CD4-positive, alpha-beta memory T cell (primary cell): ENCODE measurements at regions of chr1 and their contacts with region 1.

Region 1: GRCh38 chr1:154936555-154937084 is at the start of gene PMVK:
- DNase-seq: peak; percentile 98 to 99 (median 98)
- H3K4me3 ChIP-seq: peak within 1 kb of the TSS; percentile 51 to 93
- H3K4me3 Mint-ChIP-seq: peak within 1 kb of the TSS; percentile 93 to 99 (median 97)
- H3K27ac ChIP-seq: peak within 1 kb of the TSS; percentile 96
- H3K27ac Mint-ChIP-seq: peak within 1 kb of the TSS; percentile 97 to 100 (median 99)
- H3K4me1 ChIP-seq: peaks cover 54% of the 10 kb centered on the region
- H3K4me1 Mint-ChIP-seq: peaks cover 36 to 70% (median 58%) of the 10 kb centered on the region in 4 donors
- H3K27me3 ChIP-seq: no peaks in the 10 kb centered on the region
- H3K27me3 Mint-ChIP-seq: no peaks in the 10 kb centered on the region
- total RNA-seq, gene PMVK: 17.6 to 21.2 TPM

Region 2: GRCh38 chr1:154791292-154792166 is 145.1 kb before region 1 on chr1:
- CTCF ChIA-PET with region 1: interaction called, 3 read pairs
- POLR2A ChIA-PET with region 1: interaction called, 11 read pairs
- intact Hi-C with region 1: no loop called
- DNase-seq: peak; percentile 82 to 94 (median 86)
- H3K4me3 ChIP-seq: peak overlapping the region in 1 of 2 donors; percentile 24
- H3K4me3 Mint-ChIP-seq: peak overlapping the region in 7 of 8 donors; percentile 68 to 87 (median 76)
- H3K27ac ChIP-seq: peak overlapping the region; percentile 40
- H3K27ac Mint-ChIP-seq: peak overlapping the region; percentile 61 to 92 (median 86)
- H3K4me1 ChIP-seq: peaks cover 28% of the 10 kb centered on the region
- H3K4me1 Mint-ChIP-seq: peaks cover 18 to 33% (median 24%) of the 10 kb centered on the region in 4 donors
- H3K27me3 ChIP-seq: no peaks in the 10 kb centered on the region
- H3K27me3 Mint-ChIP-seq: peaks cover 0 to 5% of the 10 kb centered on the region in 2 donors

Region 3: DNA sequence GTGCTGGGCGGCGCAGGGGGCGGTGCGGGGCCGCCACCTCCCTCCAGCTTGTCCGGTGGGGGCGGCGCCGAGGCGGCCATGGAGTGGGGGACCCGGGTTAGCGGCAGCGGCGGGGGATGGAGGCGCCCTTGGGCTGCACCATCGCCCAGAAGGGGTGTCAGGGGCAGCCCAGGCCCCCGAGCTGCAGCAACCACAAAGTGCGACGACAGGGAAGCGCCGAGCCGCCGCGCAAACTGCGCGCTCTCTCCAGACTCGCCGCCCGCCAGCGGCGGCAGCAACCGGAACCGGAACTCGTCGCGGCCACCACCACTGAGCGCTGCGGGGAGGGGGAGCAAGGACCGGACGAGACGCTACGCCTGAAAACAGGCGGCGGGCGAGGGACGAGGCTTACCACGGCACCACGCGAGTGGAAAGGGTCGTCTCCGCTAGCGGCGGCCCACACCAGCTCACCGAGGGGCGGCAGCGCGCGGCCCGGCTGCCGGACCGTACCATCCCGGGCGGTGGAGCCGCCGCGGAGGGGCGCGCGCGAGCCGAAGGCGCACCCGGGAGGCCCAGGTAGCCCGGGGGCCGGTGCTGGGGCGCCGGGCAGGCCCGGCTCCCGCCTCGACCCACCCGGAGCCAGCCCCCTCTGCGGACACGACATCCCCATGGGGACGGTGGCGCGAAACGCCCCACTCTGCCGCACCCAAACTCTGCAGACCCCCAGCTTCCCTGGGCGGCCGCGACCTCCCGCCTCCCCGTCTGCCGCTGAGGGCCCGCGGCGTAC is 25.1 kb after region 1 on chr1 and contains the start of gene PYGO2:
- CTCF ChIA-PET with region 1: interaction called, 12 read pairs
- POLR2A ChIA-PET with region 1: interaction called, 50 read pairs
- intact Hi-C with region 1: loop called (anchors 1 kb)
- DNase-seq: peak; percentile 81 to 88 (median 82)
- H3K4me3 ChIP-seq: peak within 1 kb of the TSS; percentile 63 to 65
- H3K4me3 Mint-ChIP-seq: peak within 1 kb of the TSS; percentile 94 to 98 (median 97)
- H3K27ac ChIP-seq: peak within 1 kb of the TSS; percentile 84
- H3K27ac Mint-ChIP-seq: peak within 1 kb of the TSS; percentile 97 to 99 (median 98)
- H3K4me1 ChIP-seq: peaks cover 43% of the 10 kb centered on the region
- H3K4me1 Mint-ChIP-seq: peaks cover 21 to 57% (median 37%) of the 10 kb centered on the region in 4 donors
- H3K27me3 ChIP-seq: no peaks in the 10 kb centered on the region
- H3K27me3 Mint-ChIP-seq: no peaks in the 10 kb centered on the region
- total RNA-seq, gene PYGO2: 78.4 to 80.2 TPM

Region 4: DNA sequence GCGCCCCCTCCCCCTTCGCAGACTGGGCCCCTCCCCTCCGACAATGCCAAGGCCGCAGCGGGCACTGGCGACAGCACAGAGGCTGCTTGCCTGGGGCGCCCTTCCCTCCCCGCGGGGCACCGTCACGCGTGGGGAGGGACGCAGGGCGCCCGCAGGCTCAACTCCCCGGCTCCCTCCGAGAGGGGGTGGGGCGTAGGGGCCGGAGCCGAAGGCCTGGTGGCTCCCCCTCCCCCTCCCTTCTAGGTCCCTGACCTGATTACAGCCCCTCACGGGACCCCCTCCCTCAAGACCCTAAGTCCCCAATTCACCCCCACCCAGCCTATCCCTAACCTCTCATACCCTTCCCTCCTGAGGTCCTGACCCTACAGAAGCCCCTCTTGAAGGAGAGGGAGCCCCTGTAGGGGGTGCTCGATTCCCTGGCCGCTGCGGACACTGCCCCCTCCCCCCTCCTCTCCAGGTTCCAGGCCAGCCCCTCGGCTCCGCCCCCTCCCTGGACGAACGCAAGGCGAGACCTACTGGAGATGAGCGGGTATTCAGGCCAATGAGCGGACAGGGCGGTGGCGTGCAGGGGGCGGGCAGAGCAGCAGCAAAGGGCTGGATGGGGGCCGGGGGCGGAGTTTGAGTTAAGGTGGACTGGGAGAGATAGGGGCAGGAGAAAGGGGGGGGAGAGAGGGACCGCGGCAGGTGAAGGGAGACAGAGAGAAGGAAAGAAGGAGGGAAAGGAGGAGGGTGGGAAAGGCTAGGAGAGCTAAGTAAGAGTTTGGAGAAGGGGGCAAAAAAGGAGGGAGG is 65.2 kb after region 1 on chr1:
- CTCF ChIA-PET with region 1: interaction called, 6 read pairs
- POLR2A ChIA-PET with region 1: interaction called, 27 read pairs
- intact Hi-C with region 1: loop called (anchors 1 kb)
- DNase-seq: peak; percentile 95 to 98 (median 97)
- H3K4me3 ChIP-seq: peak overlapping the region; percentile 78 to 80
- H3K4me3 Mint-ChIP-seq: peak overlapping the region; percentile 88 to 99 (median 96)
- H3K27ac ChIP-seq: peak overlapping the region; percentile 92
- H3K27ac Mint-ChIP-seq: peak overlapping the region; percentile 90 to 99 (median 95)
- H3K4me1 ChIP-seq: peaks cover 59% of the 10 kb centered on the region
- H3K4me1 Mint-ChIP-seq: peaks cover 39 to 78% (median 51%) of the 10 kb centered on the region in 4 donors
- H3K27me3 ChIP-seq: no peaks in the 10 kb centered on the region
- H3K27me3 Mint-ChIP-seq: no peaks in the 10 kb centered on the region

Region 5: GRCh38 chr1:155063550-155064110 is 127.0 kb after region 1 on chr1 and contains the start of gene EFNA4:
- CTCF ChIA-PET with region 1: interaction called, 5 read pairs
- POLR2A ChIA-PET with region 1: interaction called, 3 read pairs
- intact Hi-C with region 1: loop called (anchors 1 kb)
- DNase-seq: peak; percentile 83 to 87 (median 86)
- H3K4me3 ChIP-seq: peak within 1 kb of the TSS; percentile 63 to 70
- H3K4me3 Mint-ChIP-seq: peak within 1 kb of the TSS; percentile 91 to 99 (median 94)
- H3K27ac ChIP-seq: peak within 1 kb of the TSS; percentile 51
- H3K27ac Mint-ChIP-seq: peak within 1 kb of the TSS; percentile 81 to 94 (median 85)
- H3K4me1 ChIP-seq: peaks cover 35% of the 10 kb centered on the region
- H3K4me1 Mint-ChIP-seq: peaks cover 23 to 52% (median 32%) of the 10 kb centered on the region in 4 donors
- H3K27me3 ChIP-seq: no peaks in the 10 kb centered on the region
- H3K27me3 Mint-ChIP-seq: no peaks in the 10 kb centered on the region
- total RNA-seq, gene EFNA4: 6.0 to 8.5 TPM